MCF 10A (cell line): ENCODE measurements at regions of chr21 and their contacts with region 1.

Region 1: DNA sequence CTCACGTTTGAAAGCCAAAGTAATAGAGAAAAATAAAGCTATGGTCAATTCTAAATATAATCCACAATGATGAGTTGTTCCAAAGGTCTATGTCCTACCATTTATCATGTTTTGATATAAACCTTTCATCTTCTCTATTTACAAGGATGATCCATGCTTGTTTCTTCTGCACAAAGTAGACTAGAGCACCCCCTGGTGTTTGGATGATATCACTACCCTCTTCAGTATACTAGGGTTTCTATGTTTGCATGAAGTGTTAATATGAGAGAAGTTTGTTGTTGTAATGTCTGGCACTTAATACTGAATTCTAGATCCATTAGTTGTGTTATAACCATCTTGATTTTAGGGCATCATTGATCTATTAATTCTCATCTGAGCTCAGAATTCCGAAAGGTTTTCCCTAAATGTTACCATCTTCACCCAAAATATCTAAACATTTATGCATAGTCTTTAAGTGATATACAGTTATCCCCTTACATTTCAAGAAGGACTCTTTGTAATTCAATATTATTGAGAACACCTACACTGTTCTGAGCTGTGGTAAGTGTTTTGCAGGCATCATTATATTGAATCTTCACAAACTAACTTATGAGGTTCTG is 21.1 kb downstream of the CLDN8 start:
- DNase-seq: peak; percentile 72
- H3K4me3 Mint-ChIP-seq: no peak overlapping the region
- H3K27ac Mint-ChIP-seq: no peak overlapping the region
- H3K4me1 Mint-ChIP-seq: no peaks in the 10 kb centered on the region
- H3K27me3 Mint-ChIP-seq: no peaks in the 10 kb centered on the region
- CTCF ChIP-seq: peak; percentile 80

Region 2: DNA sequence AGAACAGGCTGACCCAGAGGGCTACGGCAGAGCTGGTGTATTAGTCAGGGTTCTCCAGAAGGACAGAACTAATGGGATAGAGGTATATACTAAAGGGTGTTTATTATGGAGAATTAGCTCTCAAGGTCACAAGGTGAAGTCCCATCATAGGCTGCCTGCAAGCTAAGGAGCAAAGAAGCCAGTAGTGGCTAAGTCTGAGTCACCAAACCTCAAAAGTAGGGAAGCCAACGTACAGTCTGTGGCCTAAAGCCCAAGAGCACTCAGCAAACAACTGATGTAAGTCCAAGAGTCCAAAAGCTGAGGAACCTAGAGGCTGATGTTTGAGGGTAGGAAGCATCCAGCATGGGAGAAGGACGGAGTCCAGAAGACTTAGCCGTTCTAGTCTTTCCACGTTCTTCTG is 716.9 kb before region 1 on chr21:
- CTCF ChIA-PET with region 1: interaction called, 3 read pairs
- POLR2A ChIA-PET with region 1: no interaction called
- intact Hi-C with region 1: loop called (anchors 2 kb)
- DNase-seq: peak; percentile 4
- H3K4me3 Mint-ChIP-seq: no peak overlapping the region
- H3K27ac Mint-ChIP-seq: no peak overlapping the region
- H3K4me1 Mint-ChIP-seq: no peaks in the 10 kb centered on the region
- H3K27me3 Mint-ChIP-seq: no peaks in the 10 kb centered on the region
- CTCF ChIP-seq: no peak

Region 3: GRCh38 chr21:30044445-30045064 is 150.2 kb before region 1 on chr21:
- CTCF ChIA-PET with region 1: interaction called, 94 read pairs
- POLR2A ChIA-PET with region 1: no interaction called
- intact Hi-C with region 1: loop called (anchors 1 kb)
- DNase-seq: peak; percentile 53
- H3K4me3 Mint-ChIP-seq: no peak overlapping the region
- H3K27ac Mint-ChIP-seq: no peak overlapping the region
- H3K4me1 Mint-ChIP-seq: no peaks in the 10 kb centered on the region
- H3K27me3 Mint-ChIP-seq: peaks cover 6% of the 10 kb centered on the region
- CTCF ChIP-seq: peak; percentile 63

Region 4: GRCh38 chr21:30081506-30081905 is 113.3 kb before region 1 on chr21:
- CTCF ChIA-PET with region 1: interaction called, 14 read pairs
- POLR2A ChIA-PET with region 1: no interaction called
- intact Hi-C with region 1: no loop called
- DNase-seq: no peak
- H3K4me3 Mint-ChIP-seq: no peak overlapping the region
- H3K27ac Mint-ChIP-seq: no peak overlapping the region
- H3K4me1 Mint-ChIP-seq: no peaks in the 10 kb centered on the region
- H3K27me3 Mint-ChIP-seq: no peaks in the 10 kb centered on the region
- CTCF ChIP-seq: no peak

Region 5: GRCh38 chr21:30206551-30207251 is 11.9 kb after region 1 on chr21:
- CTCF ChIA-PET with region 1: interaction called, 17 read pairs
- POLR2A ChIA-PET with region 1: no interaction called
- intact Hi-C with region 1: no loop called
- DNase-seq: peak; percentile 14
- H3K4me3 Mint-ChIP-seq: no peak overlapping the region
- H3K27ac Mint-ChIP-seq: peak overlapping the region; percentile 25
- H3K4me1 Mint-ChIP-seq: peaks cover 7% of the 10 kb centered on the region
- H3K27me3 Mint-ChIP-seq: no peaks in the 10 kb centered on the region
- CTCF ChIP-seq: no peak

Region 6: GRCh38 chr21:30478011-30478410 is 283.2 kb after region 1 on chr21:
- CTCF ChIA-PET with region 1: no interaction called
- POLR2A ChIA-PET with region 1: no interaction called
- intact Hi-C with region 1: no loop called
- DNase-seq: no peak
- H3K4me3 Mint-ChIP-seq: no peak overlapping the region
- H3K27ac Mint-ChIP-seq: no peak overlapping the region
- H3K4me1 Mint-ChIP-seq: no peaks in the 10 kb centered on the region
- H3K27me3 Mint-ChIP-seq: peaks cover 55% of the 10 kb centered on the region
- CTCF ChIP-seq: no peak

Region 7: DNA sequence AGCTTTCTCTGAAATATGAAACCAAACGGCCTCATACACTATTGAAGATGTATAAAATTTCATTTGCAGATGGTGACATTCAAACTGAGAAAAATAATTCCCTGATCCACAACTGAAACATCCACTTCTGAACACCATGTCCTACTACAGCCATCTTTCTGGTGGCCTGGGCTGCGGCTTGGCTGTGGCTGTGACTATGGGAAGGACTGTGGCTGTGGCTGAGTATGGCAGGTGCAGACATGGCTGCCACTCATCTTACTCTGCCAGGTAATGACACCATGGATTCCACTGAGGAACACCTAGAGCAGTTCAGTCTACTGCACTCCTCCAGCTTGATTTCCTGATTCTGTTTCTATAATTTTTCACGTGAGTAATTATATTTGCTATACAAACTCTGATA is 425.7 kb after region 1 on chr21 and contains the start of gene KRTAP20-4:
- CTCF ChIA-PET with region 1: no interaction called
- POLR2A ChIA-PET with region 1: no interaction called
- intact Hi-C with region 1: no loop called
- DNase-seq: no peak
- H3K4me3 Mint-ChIP-seq: no peak within 1 kb of the TSS
- H3K27ac Mint-ChIP-seq: peak within 1 kb of the TSS; percentile 51
- H3K4me1 Mint-ChIP-seq: no peaks in the 10 kb centered on the region
- H3K27me3 Mint-ChIP-seq: no peaks in the 10 kb centered on the region
- CTCF ChIP-seq: no peak
- total RNA-seq, gene KRTAP20-4: not detected in 2 replicates